ENCODE measurements at regions of chr1 and their contacts with region 1.

Region 1: DNA sequence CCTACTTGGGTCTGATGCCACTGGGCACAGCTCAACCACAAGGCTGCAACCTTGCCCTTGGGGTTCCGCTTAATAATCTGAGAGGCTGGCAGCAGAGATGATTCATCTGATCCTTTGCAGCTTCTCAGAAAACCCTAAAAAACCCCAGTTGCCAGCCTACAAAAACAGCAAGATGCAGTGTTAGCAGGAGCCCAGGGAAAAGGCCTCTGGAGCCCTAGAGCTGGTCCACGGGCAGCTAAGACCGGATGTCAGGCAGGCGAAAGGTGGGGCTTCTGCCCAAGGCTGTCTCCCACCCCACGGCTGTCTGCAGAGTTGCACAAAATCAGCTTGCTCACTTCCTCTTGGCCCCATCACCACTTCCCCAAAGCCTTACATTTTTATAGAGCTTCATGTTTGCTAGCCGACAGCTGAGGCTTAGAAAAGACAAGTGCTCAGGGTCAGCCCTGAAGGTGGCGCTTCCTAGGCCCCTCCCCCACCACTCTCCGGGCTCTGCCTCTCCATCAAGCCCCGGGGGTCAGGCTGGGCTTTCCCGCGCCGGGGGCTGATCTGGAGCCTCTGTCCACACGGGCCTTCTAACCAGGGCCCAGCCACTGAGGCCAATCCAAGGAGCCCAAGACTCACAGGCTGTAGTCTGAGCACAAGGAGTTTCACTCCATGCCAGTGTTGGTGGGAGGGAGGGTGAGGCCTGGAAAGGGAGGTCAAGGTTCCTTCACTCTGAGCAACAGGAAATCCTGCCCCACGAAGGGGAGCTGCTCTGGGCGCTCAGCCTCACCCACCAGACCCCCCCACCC is 4.2 kb upstream of the ADORA3 start:
- DNase-seq: peak; percentile 58
- H3K4me3 Mint-ChIP-seq: peak overlapping the region; percentile 68
- H3K27ac Mint-ChIP-seq: peak overlapping the region; percentile 92
- H3K4me1 Mint-ChIP-seq: peaks cover 58% of the 10 kb centered on the region
- H3K27me3 Mint-ChIP-seq: no peaks in the 10 kb centered on the region

Region 2: GRCh38 chr1:111448918-111449702 is 58.5 kb before region 1 on chr1 and contains the starts of genes ATP5PB and WDR77:
- intact Hi-C with region 1: loop called (anchors 5 kb)
- DNase-seq: peak; percentile 91
- H3K4me3 Mint-ChIP-seq: peak within 1 kb of the TSS; percentile 100
- H3K27ac Mint-ChIP-seq: peak within 1 kb of the TSS; percentile 96
- H3K4me1 Mint-ChIP-seq: peaks cover 52% of the 10 kb centered on the region
- H3K27me3 Mint-ChIP-seq: no peaks in the 10 kb centered on the region
- total RNA-seq, gene ATP5PB: 294 and 308 TPM in 2 replicates
- total RNA-seq, gene WDR77: 46.5 and 52.6 TPM in 2 replicates

Region 3: GRCh38 chr1:111467865-111468711 is 39.5 kb before region 1 on chr1:
- intact Hi-C with region 1: no loop called
- DNase-seq: no peak
- H3K4me3 Mint-ChIP-seq: no peak overlapping the region
- H3K27ac Mint-ChIP-seq: no peak overlapping the region
- H3K4me1 Mint-ChIP-seq: peaks cover 19% of the 10 kb centered on the region
- H3K27me3 Mint-ChIP-seq: no peaks in the 10 kb centered on the region

Region 4: GRCh38 chr1:111592389-111593361 is 85.1 kb after region 1 on chr1:
- intact Hi-C with region 1: loop called (anchors 2 kb)
- DNase-seq: peak; percentile 84
- H3K4me3 Mint-ChIP-seq: peak overlapping the region; percentile 54
- H3K27ac Mint-ChIP-seq: peak overlapping the region; percentile 89
- H3K4me1 Mint-ChIP-seq: peaks cover 74% of the 10 kb centered on the region
- H3K27me3 Mint-ChIP-seq: no peaks in the 10 kb centered on the region

Region 5: DNA sequence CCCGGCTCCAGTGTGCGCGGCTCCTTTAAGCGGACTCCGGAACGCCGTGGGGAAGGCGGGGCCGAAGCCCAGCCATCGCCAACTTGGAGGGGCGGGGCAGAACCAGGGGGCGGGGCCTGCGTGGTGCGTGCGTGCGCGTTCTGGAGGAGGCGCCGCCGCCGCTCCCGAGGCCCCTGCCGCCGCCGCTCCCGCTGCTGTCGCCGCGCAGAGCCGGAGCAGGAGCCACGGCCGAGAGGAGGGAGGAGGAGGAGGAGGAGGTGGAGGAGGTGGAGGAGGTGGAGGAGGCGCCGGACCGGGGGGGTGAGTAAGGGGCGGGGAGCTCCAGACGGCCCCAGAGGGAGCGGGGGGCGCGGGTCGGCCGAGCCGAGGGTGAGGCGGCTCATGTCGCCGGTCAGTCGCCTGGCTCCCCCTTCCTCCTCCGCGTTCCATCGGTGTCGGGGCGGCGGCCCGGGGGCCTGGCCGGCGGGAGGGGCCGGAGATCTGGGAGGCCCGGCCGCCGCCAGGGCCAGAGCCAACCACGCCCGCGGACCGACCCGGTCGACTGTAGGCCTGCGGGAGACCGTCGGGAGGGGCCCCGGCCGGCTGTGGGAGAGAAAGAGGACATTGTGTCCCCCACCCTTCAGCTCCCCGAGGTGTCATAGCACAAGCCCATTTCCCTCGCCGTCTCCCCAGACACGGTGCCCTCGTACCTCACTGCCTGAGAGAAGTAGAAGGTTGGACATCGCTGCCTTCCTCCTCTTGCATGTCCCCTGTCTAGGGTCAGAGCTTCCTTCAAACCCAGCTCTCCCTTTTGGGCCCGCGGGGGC is 112.2 kb after region 1 on chr1 and contains the start of gene RAP1A:
- intact Hi-C with region 1: loop called (anchors 1 kb)
- DNase-seq: peak; percentile 87
- H3K4me3 Mint-ChIP-seq: peak within 1 kb of the TSS; percentile 96
- H3K27ac Mint-ChIP-seq: peak within 1 kb of the TSS; percentile 88
- H3K4me1 Mint-ChIP-seq: peaks cover 66% of the 10 kb centered on the region
- H3K27me3 Mint-ChIP-seq: no peaks in the 10 kb centered on the region
- total RNA-seq, gene RAP1A: 219 TPM in 2 replicates

Region 6: GRCh38 chr1:111709986-111710385 is 202.4 kb after region 1 on chr1:
- intact Hi-C with region 1: loop called (anchors 2 kb)
- DNase-seq: no peak
- H3K4me3 Mint-ChIP-seq: no peak overlapping the region
- H3K27ac Mint-ChIP-seq: peak overlapping the region; percentile 63
- H3K4me1 Mint-ChIP-seq: peaks cover 27% of the 10 kb centered on the region
- H3K27me3 Mint-ChIP-seq: no peaks in the 10 kb centered on the region